Activated CD8-positive, alpha-beta T cell treated with anti-CD3 and anti-CD28 coated beads for 36 hours (primary cell): ENCODE measurements at regions of chr7 and their contacts with region 1.

Region 1: DNA sequence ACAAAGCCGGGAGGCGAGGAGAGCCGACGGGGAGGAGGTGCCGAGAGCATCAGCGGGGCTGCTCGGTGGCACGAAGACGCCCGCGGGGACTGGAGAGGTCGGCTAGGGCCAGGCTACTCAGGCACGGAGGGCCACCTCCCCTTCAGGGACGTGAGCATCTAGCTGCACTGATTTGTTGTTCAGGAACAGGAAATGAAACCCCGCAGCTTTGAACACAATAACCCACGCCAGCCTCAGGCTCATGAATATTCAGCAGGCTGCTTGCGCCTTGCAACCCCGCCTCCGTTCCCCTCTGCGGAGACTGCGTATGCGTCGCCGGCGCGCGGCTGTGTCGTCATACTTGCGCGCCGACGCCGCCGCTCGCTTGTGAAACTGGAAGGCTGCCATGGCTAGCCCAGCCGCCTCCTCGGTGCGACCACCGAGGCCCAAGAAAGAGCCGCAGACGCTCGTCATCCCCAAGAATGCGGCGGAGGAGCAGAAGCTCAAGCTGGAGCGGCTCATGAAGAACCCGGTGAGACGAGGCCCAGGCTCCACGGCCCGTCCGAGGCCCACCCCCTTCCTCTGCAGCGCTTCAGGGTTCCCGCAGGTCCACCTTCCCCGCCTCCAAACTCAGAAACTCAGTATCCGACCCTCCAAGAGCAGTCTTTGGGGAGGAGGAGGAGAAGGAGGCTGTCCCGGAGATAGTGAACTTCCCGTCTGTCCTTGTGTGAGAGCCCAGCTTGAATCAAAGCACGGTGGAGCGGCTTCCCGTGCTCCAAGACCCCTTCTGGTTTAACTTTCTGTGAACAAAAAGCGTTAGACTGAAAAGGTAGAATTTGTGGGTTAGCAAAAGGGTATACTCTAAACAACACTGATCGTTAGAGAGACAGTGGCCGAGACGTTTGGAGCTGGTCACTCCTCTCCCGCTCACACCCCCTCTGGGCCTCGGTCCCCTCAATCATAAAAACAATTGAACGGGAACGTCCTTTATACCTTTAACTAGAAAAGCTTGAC is at the start of gene PRKRIP1:
- DNase-seq: peak; percentile 96
- ATAC-seq: peak; percentile 96
- H3K4me3 Mint-ChIP-seq: peak within 1 kb of the TSS; percentile 91
- H3K27ac Mint-ChIP-seq: peak within 1 kb of the TSS; percentile 90
- H3K4me1 Mint-ChIP-seq: peaks cover 16% of the 10 kb centered on the region
- H3K27me3 Mint-ChIP-seq: no peaks in the 10 kb centered on the region
- CTCF ChIP-seq: no peak
- total RNA-seq, gene PRKRIP1: 29.8 to 33.6 TPM

Region 2: DNA sequence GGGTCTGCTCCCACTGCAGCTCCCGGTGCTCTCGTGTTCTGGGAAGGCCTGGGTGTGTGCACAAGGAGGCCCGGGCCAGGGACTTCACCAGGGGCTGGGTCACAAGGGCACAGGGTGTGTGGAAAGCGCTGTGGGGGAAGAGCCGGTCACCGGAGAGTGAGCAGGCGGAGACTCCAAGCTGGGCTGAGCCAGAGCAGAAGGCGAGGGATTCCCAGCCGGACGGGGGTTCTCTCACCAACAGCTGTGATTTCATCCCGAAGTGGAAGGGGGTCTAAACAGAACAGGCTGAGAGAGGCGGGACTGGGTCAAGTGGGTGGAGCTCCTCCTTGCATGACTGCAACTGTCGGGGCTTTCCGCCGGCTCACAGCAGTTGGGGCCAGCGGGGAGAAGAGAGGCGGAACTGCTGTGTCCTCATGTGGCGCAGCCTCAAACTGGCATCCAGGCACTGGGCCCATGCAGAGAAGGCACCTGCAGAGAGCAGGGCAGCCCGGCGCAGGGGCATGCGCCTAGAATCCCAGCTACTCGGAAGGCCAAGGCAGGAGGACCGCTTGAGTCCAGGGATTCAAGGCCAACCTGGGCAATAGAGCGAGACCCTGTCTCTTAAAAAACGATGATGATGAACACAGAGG is 29.4 kb after region 1 on chr7:
- CTCF ChIA-PET with region 1: interaction called, 3 read pairs
- POLR2A ChIA-PET with region 1: interaction called, 24 read pairs
- intact Hi-C with region 1: no loop called
- DNase-seq: peak; percentile 93
- ATAC-seq: peak; percentile 80
- H3K4me3 Mint-ChIP-seq: peak overlapping the region; percentile 75
- H3K27ac Mint-ChIP-seq: peak overlapping the region; percentile 98
- H3K4me1 Mint-ChIP-seq: peaks cover 65% of the 10 kb centered on the region
- H3K27me3 Mint-ChIP-seq: no peaks in the 10 kb centered on the region
- CTCF ChIP-seq: no peak

Region 3: GRCh38 chr7:102464577-102465280 is 68.4 kb after region 1 on chr7 and contains the starts of genes ALKBH4 and LRWD1:
- CTCF ChIA-PET with region 1: interaction called, 4 read pairs
- POLR2A ChIA-PET with region 1: interaction called, 11 read pairs
- intact Hi-C with region 1: no loop called
- DNase-seq: peak; percentile 97
- ATAC-seq: peak; percentile 95
- H3K4me3 Mint-ChIP-seq: peak within 1 kb of the TSS; percentile 94
- H3K27ac Mint-ChIP-seq: peak within 1 kb of the TSS; percentile 86
- H3K4me1 Mint-ChIP-seq: peaks cover 30% of the 10 kb centered on the region
- H3K27me3 Mint-ChIP-seq: no peaks in the 10 kb centered on the region
- CTCF ChIP-seq: peak; percentile 10
- total RNA-seq, gene ALKBH4: 6.0 to 6.9 TPM
- total RNA-seq, gene LRWD1: 12.3 to 12.7 TPM